Transverse colon (tissue), 4 donors: ENCODE measurements at regions of chr3 and their contacts with region 1.

Region 1: DNA sequence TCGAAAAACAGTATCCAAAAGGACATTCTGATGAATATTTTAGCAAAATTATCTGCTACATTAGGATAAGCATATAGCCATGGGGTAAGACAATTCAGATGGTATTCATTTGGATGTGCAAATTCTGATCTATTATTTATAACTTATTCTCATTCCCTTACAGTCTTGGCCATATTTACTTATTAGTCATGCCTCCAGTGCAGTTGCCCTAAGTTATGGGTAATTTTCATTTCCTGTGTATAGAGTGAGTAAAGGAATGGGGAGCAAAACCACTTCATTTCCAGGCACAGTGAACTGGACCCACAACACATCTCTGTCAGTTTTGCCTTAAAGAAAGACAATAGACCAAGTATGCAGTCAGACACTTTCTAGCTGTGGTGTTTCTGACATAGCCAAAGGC is 134.3 kb downstream of the POLQ start:
- DNase-seq: no peak
- H3K4me3 ChIP-seq: no peak overlapping the region
- H3K27ac ChIP-seq: no peak overlapping the region
- H3K4me1 ChIP-seq: no peaks in the 10 kb centered on the region
- H3K27me3 ChIP-seq: no peaks in the 10 kb centered on the region
- CTCF ChIP-seq: no peak
- EP300 ChIP-seq: no peak
- POLR2A ChIP-seq: no peak

Region 2: DNA sequence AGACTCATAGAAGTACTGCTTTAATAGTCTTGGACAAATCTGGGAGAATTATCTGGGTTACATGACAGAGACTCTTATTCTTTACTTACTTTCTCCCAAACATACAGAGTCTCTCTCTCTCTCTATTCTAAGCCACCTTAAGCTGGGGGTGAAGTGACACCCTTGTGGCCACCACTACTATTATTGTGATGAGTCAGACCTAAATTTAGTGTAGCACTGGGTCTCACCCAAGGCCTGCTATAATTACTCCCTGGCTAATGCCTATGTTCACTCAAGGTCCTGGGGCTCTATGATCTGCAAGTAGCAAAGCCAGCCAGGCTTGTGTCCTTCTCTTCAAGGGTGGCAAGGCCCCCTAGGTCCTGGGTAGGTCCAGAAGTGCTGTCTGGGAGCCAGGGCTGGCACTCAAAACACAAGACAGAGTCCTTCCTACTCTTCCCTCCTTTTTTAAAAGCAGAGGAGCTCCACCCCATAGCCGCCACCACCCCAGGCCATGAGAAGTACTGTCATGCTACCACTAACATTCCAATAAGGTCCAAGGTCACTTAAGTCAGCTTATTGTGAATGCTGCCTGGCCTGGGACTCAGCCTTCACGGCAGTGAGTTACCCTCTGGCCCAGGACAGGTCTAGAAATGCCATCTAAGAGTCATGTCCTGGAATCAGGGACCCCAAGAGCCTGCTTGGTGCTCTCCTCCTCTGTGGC is 49.3 kb before region 1 on chr3:
- in situ Hi-C with region 1: no loop called
- intact Hi-C with region 1: loop called (anchors 2 kb)
- DNase-seq: no peak
- H3K4me3 ChIP-seq: no peak overlapping the region
- H3K27ac ChIP-seq: no peak overlapping the region
- H3K4me1 ChIP-seq: no peaks in the 10 kb centered on the region
- H3K27me3 ChIP-seq: no peaks in the 10 kb centered on the region
- CTCF ChIP-seq: no peak
- EP300 ChIP-seq: no peak
- POLR2A ChIP-seq: no peak